Activated T-helper 1 cell treated with anti-CD3 and anti-CD28 coated beads, Interleukin-12 subunit alpha, Interleukin-12 subunit beta, Interleukin-2, Interleukin-4 antibody, amounts not matched to agents 30 ng/mL and 10 ng/mL and 1 ng/mL, durations not matched to agents 14 hours and 24 hours and 36 hours (primary cell): ENCODE measurements at regions of chr3 and their contacts with region 1.

Region 1: DNA sequence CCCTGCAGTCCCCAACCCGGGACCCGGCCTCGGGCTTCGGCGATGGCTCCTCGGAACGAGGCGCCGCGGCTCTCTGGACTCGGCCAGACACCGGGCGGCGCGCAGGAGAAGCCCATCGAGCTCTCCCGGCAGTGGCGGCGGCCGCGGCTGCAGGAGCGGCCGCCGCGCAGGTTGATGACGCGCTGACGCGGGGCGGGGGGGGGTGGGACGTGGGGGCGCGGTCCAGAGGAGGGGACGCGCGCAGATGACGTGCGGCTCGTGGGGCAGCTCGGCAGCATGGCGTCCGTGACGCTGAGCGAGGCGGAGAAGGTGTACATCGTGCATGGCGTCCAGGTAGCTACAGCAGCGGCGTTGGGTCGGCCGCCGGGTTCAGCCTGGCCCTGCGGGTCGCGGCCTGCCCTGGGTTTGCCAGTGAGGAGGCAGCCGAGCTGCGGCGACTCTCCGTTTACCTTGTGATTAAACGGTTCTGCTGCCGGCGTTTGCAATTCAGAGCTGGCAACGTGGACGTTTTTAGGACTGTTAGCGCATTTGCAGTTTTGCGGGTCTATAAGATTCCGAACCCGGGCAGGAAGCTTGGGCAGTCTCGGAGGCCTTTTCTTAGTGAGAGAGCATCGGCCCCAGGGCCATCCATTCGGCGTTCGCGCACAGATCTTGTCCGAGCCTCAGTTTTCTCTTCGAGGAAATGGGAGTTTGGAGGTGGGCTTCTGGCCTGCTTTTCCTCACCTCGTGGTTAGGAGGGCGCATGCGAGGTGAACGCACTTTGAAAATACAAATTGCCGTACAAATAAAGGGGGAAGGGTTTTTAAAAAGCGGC is at the starts of genes EXOSC7 and ZDHHC3:
- DNase-seq: peak; percentile 81
- H3K4me3 Mint-ChIP-seq: peak within 1 kb of the TSS; percentile 99
- H3K27ac Mint-ChIP-seq: peak within 1 kb of the TSS; percentile 96
- H3K4me1 Mint-ChIP-seq: peaks cover 58% of the 10 kb centered on the region
- H3K27me3 Mint-ChIP-seq: no peaks in the 10 kb centered on the region
- total RNA-seq, gene EXOSC7: 93.6 and 94.4 TPM in 2 replicates
- total RNA-seq, gene ZDHHC3: 46.6 and 47.5 TPM in 2 replicates

Region 2: GRCh38 chr3:44439499-44440295 is 536.5 kb before region 1 on chr3:
- intact Hi-C with region 1: loop called (anchors 10 kb)
- DNase-seq: peak; percentile 69
- H3K4me3 Mint-ChIP-seq: peak overlapping the region; percentile 65
- H3K27ac Mint-ChIP-seq: peak overlapping the region; percentile 84
- H3K4me1 Mint-ChIP-seq: peaks cover 46% of the 10 kb centered on the region
- H3K27me3 Mint-ChIP-seq: no peaks in the 10 kb centered on the region

Region 3: DNA sequence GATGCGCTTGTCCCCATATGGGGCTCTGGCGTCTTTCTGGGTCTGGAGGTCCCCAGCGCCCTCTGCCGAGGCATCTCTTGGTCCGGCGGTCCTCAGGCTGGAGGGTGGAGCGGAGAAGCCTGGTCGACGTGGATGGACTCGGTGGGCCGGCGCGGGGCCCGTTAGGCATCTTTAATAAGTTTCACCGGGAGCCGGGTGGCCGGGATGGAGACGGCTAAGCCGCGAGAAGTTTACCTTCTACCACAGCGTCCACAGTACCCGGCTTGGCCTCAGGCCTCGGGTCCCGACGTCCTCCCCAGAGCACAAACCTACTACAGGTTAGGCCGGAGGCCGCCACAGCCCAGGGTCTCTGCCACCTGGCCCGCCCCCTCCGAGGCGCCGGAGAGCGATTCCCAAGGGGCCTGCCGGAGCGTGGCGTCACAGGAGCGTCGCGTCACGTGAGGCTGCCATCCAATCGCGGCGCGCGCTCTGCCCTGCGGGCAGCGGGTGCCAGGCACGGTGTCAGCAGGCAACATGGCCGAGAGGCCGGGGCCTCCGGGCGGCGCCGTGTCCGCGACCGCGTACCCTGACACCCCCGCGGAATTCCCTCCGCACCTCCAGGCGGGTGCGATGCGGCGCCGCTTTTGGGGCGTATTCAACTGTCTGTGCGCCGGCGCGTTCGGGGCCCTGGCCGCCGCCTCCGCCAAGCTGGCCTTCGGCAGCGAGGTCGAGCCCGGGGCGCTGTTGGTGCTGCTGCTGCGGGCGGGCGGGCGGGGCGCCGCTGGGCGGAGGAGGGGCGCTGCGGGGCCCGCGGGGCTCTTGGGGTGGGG is 114.6 kb before region 1 on chr3 and contains the start of gene TMEM42:
- intact Hi-C with region 1: loop called (anchors 1 kb)
- DNase-seq: peak; percentile 87
- H3K4me3 Mint-ChIP-seq: peak within 1 kb of the TSS; percentile 90
- H3K27ac Mint-ChIP-seq: peak within 1 kb of the TSS; percentile 90
- H3K4me1 Mint-ChIP-seq: peaks cover 33% of the 10 kb centered on the region
- H3K27me3 Mint-ChIP-seq: no peaks in the 10 kb centered on the region
- total RNA-seq, gene TMEM42: 8.6 and 10.0 TPM in 2 replicates